Vagina (tissue), 2 donors: ENCODE measurements at regions of chr16 and their contacts with region 1.

Region 1: GRCh38 chr16:84084570-84085270 is 32.0 kb downstream of the MBTPS1 start:
- DNase-seq: no peak
- H3K4me3 ChIP-seq: no peak overlapping the region
- H3K27ac ChIP-seq: no peak overlapping the region
- H3K4me1 ChIP-seq: peaks cover 5% of the 10 kb centered on the region
- H3K27me3 ChIP-seq: no peaks in the 10 kb centered on the region
- CTCF ChIP-seq: peak; percentile 7 to 39 (median 35)
- POLR2A ChIP-seq: no peak

Region 2: DNA sequence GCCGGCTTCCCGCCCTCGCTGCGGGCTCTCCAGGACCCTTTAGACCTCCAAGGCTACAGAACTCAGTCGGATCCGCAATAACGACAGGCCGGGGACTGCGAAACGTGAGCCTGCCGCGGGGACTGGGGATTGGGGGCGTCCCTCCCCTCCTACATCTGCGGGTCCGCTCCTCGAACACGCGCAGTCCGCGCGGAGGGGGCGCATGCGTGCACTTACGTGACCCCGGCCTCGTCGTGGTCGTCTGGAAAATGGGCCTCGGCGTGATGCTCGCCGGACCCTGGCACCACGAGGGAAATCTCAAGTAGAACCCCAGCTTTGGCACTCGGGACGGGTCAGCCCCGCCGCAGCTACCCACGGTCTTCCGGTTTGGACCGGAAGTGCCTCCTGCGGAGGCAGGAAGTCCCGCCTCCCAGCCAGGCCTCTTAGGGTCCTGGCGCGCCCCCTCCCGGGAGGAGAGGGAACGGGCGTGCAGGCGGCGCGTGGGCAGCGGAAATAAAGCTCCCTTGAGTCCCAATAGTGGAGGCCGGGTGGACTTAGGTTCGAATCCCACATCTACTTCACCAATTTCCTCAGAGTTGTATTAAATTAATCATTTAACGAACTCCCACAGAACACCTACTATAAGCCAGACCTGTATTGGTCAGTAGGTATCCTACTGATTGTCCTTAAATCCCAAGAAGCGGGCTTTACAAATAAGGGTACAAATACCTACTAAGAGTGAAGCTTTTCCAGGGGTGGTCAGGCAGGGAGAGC is 102.1 kb after region 1 on chr16 and contains the start of gene TAF1C:
- intact Hi-C with region 1: loop called (anchors 10 kb)
- DNase-seq: no peak
- H3K4me3 ChIP-seq: peak within 1 kb of the TSS; percentile 91 to 95
- H3K27ac ChIP-seq: peak within 1 kb of the TSS; percentile 60
- H3K4me1 ChIP-seq: peaks cover 25% of the 10 kb centered on the region
- H3K27me3 ChIP-seq: no peaks in the 10 kb centered on the region
- CTCF ChIP-seq: peak; percentile 89 to 99 (median 91)
- POLR2A ChIP-seq: no peak
- total RNA-seq, gene TAF1C: 30.2 TPM